HCT116 (cell line): ENCODE measurements at regions of chr12 and their contacts with region 1.

Region 1: GRCh38 chr12:108618079-108618952 is 15.4 kb downstream of the SELPLG start:
- DNase-seq: peak; percentile 64
- ATAC-seq: peak; percentile 96
- H3K4me3 ChIP-seq: no peak overlapping the region
- H3K27ac ChIP-seq: no peak overlapping the region
- H3K4me1 ChIP-seq: peaks cover 2 to 16% of the 10 kb centered on the region in 2 experiments
- H3K27me3 ChIP-seq: no peaks in the 10 kb centered on the region
- CTCF ChIP-seq: peak; percentile 95 to 99 (median 96)
- POLR2A ChIP-seq: no peak
- RAD21 ChIP-seq: peak; percentile 99

Region 2: GRCh38 chr12:107912421-107913004 is 705.8 kb before region 1 on chr12:
- CTCF ChIA-PET with region 1: no interaction called
- POLR2A ChIA-PET with region 1: no interaction called
- RAD21 ChIA-PET with region 1: no interaction called
- intact Hi-C with region 1: loop called (anchors 10 kb)
- DNase-seq: peak; percentile 28
- ATAC-seq: peak; percentile 93
- H3K4me3 ChIP-seq: no peak overlapping the region
- H3K27ac ChIP-seq: no peak overlapping the region
- H3K4me1 ChIP-seq: peaks cover 0 to 2% of the 10 kb centered on the region in 2 experiments; a peak in 1 of 4 replicates
- H3K27me3 ChIP-seq: peaks cover 20% of the 10 kb centered on the region; the same call in 1 of the 2 replicates
- CTCF ChIP-seq: peak; percentile 57 to 96 (median 95); a peak in 5 of 6 replicates
- POLR2A ChIP-seq: no peak
- RAD21 ChIP-seq: peak; percentile 6; the same call in 1 of the 2 replicates

Region 3: GRCh38 chr12:108337235-108338223 is 280.8 kb before region 1 on chr12:
- CTCF ChIA-PET with region 1: no interaction called
- POLR2A ChIA-PET with region 1: no interaction called
- RAD21 ChIA-PET with region 1: no interaction called
- intact Hi-C with region 1: loop called (anchors 10 kb)
- DNase-seq: peak; percentile 21
- ATAC-seq: peak; percentile 94
- H3K4me3 ChIP-seq: no peak overlapping the region
- H3K27ac ChIP-seq: no peak overlapping the region
- H3K4me1 ChIP-seq: peaks cover 0 to 4% of the 10 kb centered on the region in 2 experiments; a peak in 1 of 4 replicates
- H3K27me3 ChIP-seq: no peaks in the 10 kb centered on the region
- CTCF ChIP-seq: peak; percentile 34 to 69 (median 69); a peak in 5 of 6 replicates
- POLR2A ChIP-seq: no peak
- RAD21 ChIP-seq: peak; percentile 41; the same call in 1 of the 2 replicates

Region 4: DNA sequence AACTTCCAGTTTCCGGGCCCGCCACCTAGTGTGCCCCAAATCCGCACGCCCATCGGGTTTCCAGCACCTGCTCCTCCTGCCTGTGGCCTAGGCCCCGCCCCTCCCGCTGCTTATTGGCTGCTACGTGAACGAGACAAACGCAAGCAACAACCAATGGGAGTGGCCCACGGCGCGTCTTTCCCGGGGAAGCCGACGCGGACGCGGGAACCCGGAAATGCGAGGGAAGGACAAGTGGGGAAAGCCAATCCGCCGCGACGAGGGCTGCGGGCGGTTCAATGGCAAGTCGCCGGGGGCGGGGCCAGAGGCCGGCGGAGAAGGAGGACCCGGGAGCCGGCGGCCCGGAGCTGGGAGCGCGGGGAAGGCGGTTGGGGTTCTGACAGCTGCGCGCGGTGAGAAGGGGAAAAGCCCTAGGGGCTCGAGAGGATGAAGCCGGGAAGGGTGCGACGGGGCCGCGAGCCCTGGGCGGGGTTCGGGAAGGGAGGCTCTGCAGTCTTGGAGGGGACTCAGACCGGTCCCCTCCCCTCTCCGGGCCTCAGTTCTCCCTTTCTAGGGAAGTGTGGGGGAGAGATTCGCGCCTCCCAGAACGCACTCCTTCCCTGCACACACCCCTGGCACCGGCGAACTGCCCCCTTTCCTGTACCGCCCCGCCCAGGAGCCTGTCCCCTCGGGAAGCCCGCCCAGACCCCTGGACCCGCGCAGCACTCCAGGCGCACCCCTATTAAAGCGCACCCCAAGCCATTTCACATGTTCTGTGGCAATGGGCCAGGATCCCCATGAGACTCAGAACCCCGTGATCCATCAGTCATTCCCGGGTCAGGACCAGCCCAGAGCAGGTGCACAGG is 103.1 kb before region 1 on chr12 and contains the start of gene FICD:
- CTCF ChIA-PET with region 1: interaction called, 3 read pairs
- POLR2A ChIA-PET with region 1: no interaction called
- RAD21 ChIA-PET with region 1: no interaction called
- intact Hi-C with region 1: loop called (anchors 1 kb)
- DNase-seq: peak; percentile 96
- ATAC-seq: peak; percentile 90
- H3K4me3 ChIP-seq: peak within 1 kb of the TSS; percentile 89 to 94
- H3K27ac ChIP-seq: peak within 1 kb of the TSS; percentile 42; the same call in 1 of the 2 replicates
- H3K4me1 ChIP-seq: peaks cover 3 to 19% of the 10 kb centered on the region in 2 experiments; a peak in 2 of 4 replicates
- H3K27me3 ChIP-seq: no peaks in the 10 kb centered on the region
- CTCF ChIP-seq: no peak
- POLR2A ChIP-seq: no peak
- RAD21 ChIP-seq: no peak
- total RNA-seq, gene FICD: 5.1 TPM

Region 5: DNA sequence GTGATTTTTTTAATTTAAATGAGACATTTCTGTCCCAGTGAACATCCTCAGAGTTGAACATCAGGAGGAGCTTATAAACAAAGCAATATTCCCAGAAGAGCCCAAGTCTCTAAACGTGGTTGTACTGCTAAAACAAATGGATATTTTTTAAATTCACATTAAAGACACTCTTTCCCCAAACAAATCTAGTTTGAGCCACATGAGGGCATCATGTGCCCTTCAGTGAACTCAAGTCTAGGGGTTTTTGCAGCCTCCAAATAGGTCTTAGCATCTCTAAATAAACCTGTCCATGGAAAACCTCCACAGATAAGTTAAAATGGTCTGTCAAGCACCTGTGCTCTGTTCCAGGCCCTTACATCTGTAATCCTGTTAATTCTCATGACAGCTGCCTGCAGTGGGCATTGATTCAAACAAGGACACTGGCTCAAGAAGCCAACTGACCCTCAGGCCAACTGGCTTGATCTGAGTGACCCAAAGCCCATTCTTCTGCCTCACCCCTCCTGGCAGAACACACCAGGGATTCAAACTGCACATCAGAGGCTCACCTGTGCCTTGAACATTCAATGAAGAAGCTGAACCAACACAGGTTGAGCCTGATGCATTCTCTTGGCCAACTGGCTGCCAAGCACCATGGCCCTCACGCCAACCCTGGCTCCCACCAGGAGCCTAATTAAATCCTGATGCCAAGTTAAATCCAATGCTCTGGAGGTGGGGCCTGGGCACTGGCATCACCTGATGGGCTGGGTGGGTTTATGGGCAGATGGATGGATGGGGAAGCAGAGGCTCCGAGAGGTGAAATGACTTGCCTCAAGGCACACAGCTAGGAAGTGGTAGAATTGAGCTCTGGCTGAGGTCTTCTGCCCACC is 47.3 kb before region 1 on chr12:
- CTCF ChIA-PET with region 1: interaction called, 16 read pairs
- POLR2A ChIA-PET with region 1: no interaction called
- RAD21 ChIA-PET with region 1: no interaction called
- intact Hi-C with region 1: loop called (anchors 1 kb)
- DNase-seq: peak; percentile 28
- ATAC-seq: peak; percentile 35
- H3K4me3 ChIP-seq: no peak overlapping the region
- H3K27ac ChIP-seq: no peak overlapping the region
- H3K4me1 ChIP-seq: peaks cover 5 to 6% of the 10 kb centered on the region in 2 experiments; a peak in 3 of 4 replicates
- H3K27me3 ChIP-seq: no peaks in the 10 kb centered on the region
- CTCF ChIP-seq: peak in 2 of 3 experiments; percentile 10 to 36; a peak in 2 of 6 replicates
- POLR2A ChIP-seq: no peak
- RAD21 ChIP-seq: no peak